PC-3 (cell line): ENCODE measurements at regions of chr2 and their contacts with region 1.

Region 1: DNA sequence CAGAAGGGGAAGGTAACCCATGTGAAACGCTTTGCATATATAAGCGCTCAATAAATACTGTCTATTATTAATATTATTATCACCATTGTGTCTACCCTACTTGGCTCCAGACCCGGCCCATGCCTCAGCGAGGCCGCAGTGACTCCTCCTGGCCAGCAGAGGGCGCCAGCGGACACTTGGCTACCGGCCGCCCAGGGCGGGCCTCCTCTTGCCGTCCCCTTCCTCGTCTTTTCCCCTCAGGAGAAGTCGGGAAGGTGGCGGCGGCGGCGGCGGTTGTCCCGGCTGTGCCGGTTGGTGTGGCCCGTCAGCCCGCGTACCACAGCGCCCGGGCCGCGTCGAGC is at the start of gene AGFG1:
- DNase-seq: peak; percentile 84
- ATAC-seq: peak; percentile 53
- H3K4me3 ChIP-seq: peak within 1 kb of the TSS; percentile 94
- H3K27ac ChIP-seq: no peak within 1 kb of the TSS
- H3K4me1 ChIP-seq: peaks cover 42% of the 10 kb centered on the region
- H3K27me3 ChIP-seq: no peaks in the 10 kb centered on the region
- CTCF ChIP-seq: peak; percentile 87
- total RNA-seq, gene AGFG1: 44.0 and 56.3 TPM in 2 replicates

Region 2: GRCh38 chr2:227503433-227504406 is 31.8 kb after region 1 on chr2:
- CTCF ChIA-PET with region 1: no interaction called
- POLR2A ChIA-PET with region 1: no interaction called
- intact Hi-C with region 1: loop called (anchors 2 kb)
- DNase-seq: peak; percentile 96
- ATAC-seq: peak; percentile 96
- H3K4me3 ChIP-seq: peak overlapping the region; percentile 26; the same call in 1 of the 2 replicates
- H3K27ac ChIP-seq: peak overlapping the region; percentile 79
- H3K4me1 ChIP-seq: peaks cover 28% of the 10 kb centered on the region
- H3K27me3 ChIP-seq: no peaks in the 10 kb centered on the region
- CTCF ChIP-seq: no peak

Region 3: GRCh38 chr2:227871375-227871788 is 399.5 kb after region 1 on chr2 and contains the start of gene DAW1:
- CTCF ChIA-PET with region 1: no interaction called
- POLR2A ChIA-PET with region 1: no interaction called
- intact Hi-C with region 1: loop called (anchors 10 kb)
- DNase-seq: no peak
- ATAC-seq: no peak
- H3K4me3 ChIP-seq: peak within 1 kb of the TSS; percentile 17; the same call in 1 of the 2 replicates
- H3K27ac ChIP-seq: peak within 1 kb of the TSS; percentile 86
- H3K4me1 ChIP-seq: peaks cover 39% of the 10 kb centered on the region
- H3K27me3 ChIP-seq: no peaks in the 10 kb centered on the region
- CTCF ChIP-seq: no peak
- total RNA-seq, gene DAW1: 1.0 and 1.5 TPM in 2 replicates